Right ventricle myocardium inferior (tissue), 1 donor: ENCODE measurements at regions of chr9 and their contacts with region 1.

Region 1: GRCh38 chr9:26892251-26893029 is at the start of gene CAAP1:
- DNase-seq: peak; percentile 98
- ATAC-seq: peak; percentile 99
- total RNA-seq, gene CAAP1: 7.3 TPM

Region 2: GRCh38 chr9:26946753-26947727 is 54.6 kb after region 1 on chr9 and contains the start of gene PLAA:
- intact Hi-C with region 1: loop called (anchors 2 kb)
- DNase-seq: peak; percentile 94
- ATAC-seq: peak; percentile 99
- total RNA-seq, gene PLAA: 30.3 TPM

Region 3: DNA sequence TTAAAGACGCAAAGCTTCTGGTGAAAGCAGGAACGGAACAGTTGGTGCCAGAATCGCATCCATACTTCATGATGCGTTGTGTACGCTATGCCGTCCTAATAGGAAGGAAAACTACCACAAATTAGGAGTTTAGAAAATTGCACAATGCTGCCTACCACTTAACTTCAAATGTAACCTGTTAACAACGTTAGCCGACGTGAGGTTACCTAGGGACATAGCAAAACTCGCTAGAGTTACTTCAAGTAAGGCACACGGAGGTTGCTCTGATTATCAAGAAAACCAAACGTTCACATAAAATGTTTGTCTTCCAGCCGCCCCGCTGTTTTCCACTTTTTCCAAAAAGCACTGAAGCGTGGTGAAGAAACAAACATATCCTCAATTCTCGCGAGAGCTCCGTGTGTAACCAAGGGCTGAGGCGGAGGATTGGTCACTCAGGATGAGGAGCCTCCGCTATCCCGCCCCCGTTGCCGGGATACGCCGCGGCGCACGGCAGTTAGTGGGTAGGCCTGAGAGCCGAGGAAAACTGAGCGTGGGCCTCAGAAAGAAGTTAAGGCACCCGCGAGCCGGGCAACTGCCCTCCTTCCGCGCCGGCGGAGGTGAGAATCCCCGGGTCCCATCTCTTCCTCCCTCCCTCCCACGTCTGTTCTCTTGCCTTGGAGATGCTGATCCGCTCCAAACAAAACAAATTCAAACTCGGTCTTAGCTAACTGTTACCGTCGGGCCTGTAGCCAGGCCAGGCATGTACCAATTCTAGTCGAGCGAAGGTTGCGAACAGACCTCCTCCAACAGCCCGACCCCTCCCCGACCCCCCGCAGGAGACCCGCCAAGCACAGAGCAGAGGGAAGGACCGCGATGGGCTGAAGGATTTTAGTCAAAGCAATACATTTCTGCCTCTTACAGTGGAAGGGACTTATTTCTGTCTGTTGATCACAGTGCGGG is 63.8 kb after region 1 on chr9 and contains the start of gene IFT74:
- intact Hi-C with region 1: loop called (anchors 2 kb)
- DNase-seq: peak; percentile 99
- ATAC-seq: peak; percentile 100
- total RNA-seq, gene IFT74: 12.2 TPM